ENCODE measurements at regions of chrX and their contacts with region 1.

Region 1: GRCh38 chrX:46574774-46575381 is 1.3 kb downstream of the CHST7 start:
- DNase-seq: peak; percentile 54
- ATAC-seq: peak; percentile 31

Region 2: DNA sequence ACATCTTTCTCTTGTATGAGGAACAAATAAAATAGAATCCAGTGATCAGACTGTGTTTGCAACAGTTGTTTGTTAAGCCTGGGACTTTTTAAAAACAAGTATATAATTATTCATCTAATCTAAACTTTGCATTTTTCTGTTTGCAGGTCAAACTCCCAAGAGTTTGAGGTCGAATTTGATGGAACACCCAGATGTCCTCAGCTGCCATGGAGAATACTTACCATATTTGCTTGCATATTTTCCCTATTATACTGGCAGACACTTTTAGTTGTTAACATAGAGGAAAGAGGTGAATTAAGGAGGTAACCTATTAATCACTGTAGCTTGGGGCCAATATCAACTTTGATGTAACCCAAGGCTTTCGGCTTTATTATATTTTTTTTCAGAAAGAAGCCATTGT is 972.7 kb before region 1 on chrX:
- intact Hi-C with region 1: no loop called
- DNase-seq: no peak
- ATAC-seq: no peak

Region 3: DNA sequence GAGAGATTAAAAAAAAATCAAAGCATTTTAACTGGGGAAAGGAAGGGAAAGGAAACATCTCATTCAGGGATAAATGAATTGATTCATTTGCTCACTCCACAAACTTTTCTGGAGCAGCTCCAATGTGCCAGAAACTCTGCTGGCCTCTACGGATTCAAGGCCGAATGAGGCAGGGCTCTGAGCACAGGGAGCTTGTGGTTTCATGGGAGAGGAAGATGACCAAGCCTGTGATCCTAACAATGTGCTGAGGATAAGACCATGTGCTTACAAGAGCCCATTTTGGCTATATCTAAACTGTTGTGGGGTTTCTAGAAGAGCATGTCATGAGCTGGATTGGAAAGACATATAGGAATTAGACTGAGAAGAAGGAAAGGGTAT is 167.1 kb before region 1 on chrX:
- intact Hi-C with region 1: no loop called
- DNase-seq: no peak
- ATAC-seq: no peak

Region 4: GRCh38 chrX:46456125-46456922 is 118.6 kb before region 1 on chrX:
- intact Hi-C with region 1: no loop called
- DNase-seq: no peak
- ATAC-seq: peak; percentile 72

Region 5: GRCh38 chrX:46500054-46500453 is 74.8 kb before region 1 on chrX:
- intact Hi-C with region 1: no loop called
- DNase-seq: no peak
- ATAC-seq: no peak

Region 6: DNA sequence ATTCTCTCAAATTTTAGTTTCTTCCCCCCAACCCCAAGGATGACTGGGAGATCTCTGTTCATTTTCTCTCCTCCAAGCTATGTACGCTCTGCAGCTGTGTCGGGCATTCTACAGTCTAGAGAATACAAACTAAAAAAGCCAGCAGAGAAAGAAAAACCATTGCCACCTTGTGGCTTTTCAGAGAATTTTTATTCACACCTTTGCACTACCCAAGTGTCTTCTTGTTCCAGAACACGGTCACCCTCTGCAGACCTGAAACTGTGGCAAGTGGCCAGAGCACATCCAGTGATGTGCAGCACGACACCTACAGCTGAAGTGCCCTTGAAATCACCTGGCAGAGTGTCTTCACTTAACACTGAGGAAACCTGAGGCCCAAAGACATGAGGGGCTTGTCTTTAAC is 67.3 kb after region 1 on chrX:
- intact Hi-C with region 1: loop called (anchors 5 kb)
- DNase-seq: no peak
- ATAC-seq: peak; percentile 92